IMR-90 (cell line): ENCODE measurements at regions of chr6 and their contacts with region 1.

Region 1: GRCh38 chr6:134529921-134530320 is 212.0 kb upstream of the SGK1 start:
- DNase-seq: peak; percentile 48
- ATAC-seq: no peak
- H3K4me3 ChIP-seq: no peak overlapping the region
- H3K27ac ChIP-seq: no peak overlapping the region
- H3K4me1 ChIP-seq: peaks cover 3% of the 10 kb centered on the region
- H3K27me3 ChIP-seq: no peaks in the 10 kb centered on the region
- CTCF ChIP-seq: no peak
- POLR2A ChIP-seq: no peak
- RAD21 ChIP-seq: no peak

Region 2: DNA sequence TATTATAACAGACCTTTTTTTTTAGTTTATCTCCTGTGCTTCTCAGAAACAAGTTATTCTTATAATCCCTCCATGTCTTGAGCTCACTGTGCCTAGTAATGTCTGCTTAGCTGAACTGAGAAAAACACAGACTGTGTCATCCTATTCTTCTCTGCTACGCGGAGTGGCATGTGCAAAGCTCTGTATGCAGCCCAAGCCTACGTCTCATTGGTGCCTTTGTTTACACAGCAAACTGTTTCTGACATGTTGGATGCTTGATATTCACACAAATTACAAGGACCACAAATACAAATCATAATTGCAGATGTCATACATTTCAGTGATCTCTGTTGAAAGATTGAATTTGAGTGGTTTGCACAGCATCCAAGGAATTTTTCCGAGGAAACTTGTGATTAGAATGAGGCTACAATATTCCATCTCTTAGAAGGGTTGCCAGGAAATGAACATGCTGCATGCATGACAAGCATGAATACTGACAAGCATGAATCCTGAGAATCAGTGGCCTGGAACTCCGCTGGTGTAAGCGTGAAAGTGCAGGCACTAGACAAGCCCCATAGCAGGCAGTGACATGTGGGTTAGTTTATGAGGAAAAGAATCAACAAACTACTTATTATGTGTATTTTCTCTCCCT is 83.6 kb before region 1 on chr6:
- CTCF ChIA-PET with region 1: no interaction called
- POLR2A ChIA-PET with region 1: no interaction called
- dilution Hi-C with region 1: no loop called
- in situ Hi-C with region 1: no loop called
- intact Hi-C with region 1: no loop called
- DNase-seq: peak; percentile 78
- ATAC-seq: peak; percentile 67
- H3K4me3 ChIP-seq: no peak overlapping the region
- H3K27ac ChIP-seq: peak overlapping the region; percentile 26; the same call in 1 of the 2 replicates
- H3K4me1 ChIP-seq: peaks cover 10% of the 10 kb centered on the region
- H3K27me3 ChIP-seq: no peaks in the 10 kb centered on the region
- CTCF ChIP-seq: no peak
- POLR2A ChIP-seq: no peak
- RAD21 ChIP-seq: peak; percentile 15; the same call in 1 of the 2 replicates

Region 3: DNA sequence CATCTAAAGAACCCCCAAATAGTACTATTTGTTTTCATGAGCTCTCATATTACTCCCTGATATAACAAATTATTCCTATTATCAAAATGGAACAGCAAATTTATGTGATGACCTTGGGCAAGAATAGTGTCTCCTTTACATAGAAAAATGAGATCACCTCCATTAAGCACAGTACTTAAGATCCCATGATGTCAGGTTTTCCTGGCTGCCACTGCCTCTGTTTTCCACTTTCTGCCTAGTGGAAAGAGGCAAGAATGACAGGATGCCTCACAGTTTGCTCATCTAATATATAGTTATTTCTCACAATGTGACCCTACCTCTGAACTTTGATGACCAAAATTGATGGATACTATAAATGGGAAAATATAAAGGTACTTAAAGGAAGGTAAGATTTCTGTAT is 48.1 kb after region 1 on chr6:
- CTCF ChIA-PET with region 1: no interaction called
- POLR2A ChIA-PET with region 1: no interaction called
- dilution Hi-C with region 1: no loop called
- in situ Hi-C with region 1: no loop called
- intact Hi-C with region 1: loop called (anchors 1 kb)
- DNase-seq: peak; percentile 59
- ATAC-seq: no peak
- H3K4me3 ChIP-seq: no peak overlapping the region
- H3K27ac ChIP-seq: no peak overlapping the region
- H3K4me1 ChIP-seq: no peaks in the 10 kb centered on the region
- H3K27me3 ChIP-seq: no peaks in the 10 kb centered on the region
- CTCF ChIP-seq: peak; percentile 21; the same call in 1 of the 2 replicates
- POLR2A ChIP-seq: no peak
- RAD21 ChIP-seq: no peak